Left lung (tissue), 14 donors: ENCODE measurements at regions of chr2 and their contacts with region 1.

Region 1: GRCh38 chr2:102240640-102241370 is 54.0 kb downstream of the IL1RL2 start:
- DNase-seq: peak; percentile 90 to 98 (median 95)
- ATAC-seq: peak; percentile 99
- H3K4me3 ChIP-seq: no peak overlapping the region
- H3K27ac ChIP-seq: peak overlapping the region; percentile 67 to 78
- H3K4me1 ChIP-seq: peaks cover 8 to 57% of the 10 kb centered on the region in 2 donors
- H3K27me3 ChIP-seq: no peaks in the 10 kb centered on the region
- CTCF ChIP-seq: peak; percentile 97 to 99

Region 2: GRCh38 chr2:101396316-101396717 is 844.5 kb before region 1 on chr2:
- intact Hi-C with region 1: no loop called
- DNase-seq: no peak
- ATAC-seq: peak; percentile 47
- H3K4me3 ChIP-seq: no peak overlapping the region
- H3K27ac ChIP-seq: no peak overlapping the region
- H3K4me1 ChIP-seq: peaks cover 0 to 15% of the 10 kb centered on the region in 2 donors
- H3K27me3 ChIP-seq: peaks cover 0 to 24% of the 10 kb centered on the region in 2 donors
- CTCF ChIP-seq: no peak

Region 3: GRCh38 chr2:101860157-101860556 is 380.6 kb before region 1 on chr2:
- intact Hi-C with region 1: no loop called
- DNase-seq: no peak
- ATAC-seq: no peak
- H3K4me3 ChIP-seq: no peak overlapping the region
- H3K27ac ChIP-seq: no peak overlapping the region
- H3K4me1 ChIP-seq: no peaks in the 10 kb centered on the region
- H3K27me3 ChIP-seq: no peaks in the 10 kb centered on the region
- CTCF ChIP-seq: no peak

Region 4: GRCh38 chr2:101883863-101884262 is 356.9 kb before region 1 on chr2:
- intact Hi-C with region 1: loop called in 1 of 2 experiments (anchors 10 kb)
- DNase-seq: peak in 1 of 4 donors; percentile 35
- ATAC-seq: peak; percentile 82
- H3K4me3 ChIP-seq: no peak overlapping the region
- H3K27ac ChIP-seq: peak overlapping the region in 1 of 2 donors; percentile 19
- H3K4me1 ChIP-seq: peaks cover 0 to 28% of the 10 kb centered on the region in 2 donors
- H3K27me3 ChIP-seq: no peaks in the 10 kb centered on the region
- CTCF ChIP-seq: peak; percentile 38 to 65

Region 5: DNA sequence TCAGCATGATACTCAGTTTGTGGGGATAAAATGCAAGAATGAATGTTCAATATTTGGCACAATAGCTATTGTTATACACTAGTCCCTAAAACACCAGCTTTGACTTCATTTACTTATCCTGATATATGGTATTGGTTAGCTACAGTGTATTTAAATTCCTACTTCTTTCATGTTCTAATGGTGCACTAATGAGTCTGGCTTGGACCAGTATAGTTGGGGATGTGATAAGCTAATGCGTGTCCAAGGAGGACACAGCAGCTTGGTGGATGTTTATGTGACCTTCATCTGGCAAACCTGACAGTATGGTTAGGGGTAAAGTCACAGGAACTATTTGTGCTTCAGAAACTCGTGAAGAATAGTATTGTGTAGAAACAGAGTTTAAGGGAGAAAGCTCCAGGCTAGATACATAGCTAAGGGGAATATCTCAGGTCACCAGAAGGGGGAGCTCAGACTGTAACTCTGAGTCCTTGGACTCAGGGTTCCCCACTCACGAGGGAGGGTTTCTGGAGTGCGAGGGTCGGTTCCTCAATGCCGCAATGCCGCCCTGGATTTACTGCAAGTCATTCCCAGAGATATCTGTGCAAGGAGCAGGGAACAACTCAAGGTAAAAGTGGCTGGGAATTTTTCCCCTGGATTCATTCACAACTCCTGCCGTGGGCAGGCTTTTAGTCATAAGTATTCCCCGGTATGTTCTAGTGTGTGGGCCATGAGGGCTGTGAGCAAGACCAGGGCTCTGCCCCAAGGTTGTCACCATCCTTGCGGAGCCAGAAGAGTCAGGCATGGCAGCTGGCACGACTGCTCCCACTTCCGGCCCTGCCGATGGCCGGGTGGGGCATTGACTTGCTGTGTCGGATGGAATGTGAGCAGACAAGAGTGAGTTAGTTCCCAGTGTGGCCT is 234.6 kb before region 1 on chr2:
- intact Hi-C with region 1: loop called in 1 of 2 experiments (anchors 5 kb)
- DNase-seq: peak in 1 of 4 donors; percentile 57
- ATAC-seq: peak; percentile 86
- H3K4me3 ChIP-seq: no peak overlapping the region
- H3K27ac ChIP-seq: no peak overlapping the region
- H3K4me1 ChIP-seq: peaks cover 12 to 35% of the 10 kb centered on the region in 2 donors
- H3K27me3 ChIP-seq: no peaks in the 10 kb centered on the region
- CTCF ChIP-seq: peak; percentile 58 to 59

Region 6: GRCh38 chr2:102291318-102292251 is 50.8 kb after region 1 on chr2:
- intact Hi-C with region 1: no loop called
- DNase-seq: no peak
- ATAC-seq: peak; percentile 26
- H3K4me3 ChIP-seq: no peak overlapping the region
- H3K27ac ChIP-seq: peak overlapping the region in 1 of 2 donors; percentile 68
- H3K4me1 ChIP-seq: peaks cover 0 to 43% of the 10 kb centered on the region in 2 donors
- H3K27me3 ChIP-seq: peaks cover 0 to 6% of the 10 kb centered on the region in 2 donors
- CTCF ChIP-seq: no peak

Region 7: DNA sequence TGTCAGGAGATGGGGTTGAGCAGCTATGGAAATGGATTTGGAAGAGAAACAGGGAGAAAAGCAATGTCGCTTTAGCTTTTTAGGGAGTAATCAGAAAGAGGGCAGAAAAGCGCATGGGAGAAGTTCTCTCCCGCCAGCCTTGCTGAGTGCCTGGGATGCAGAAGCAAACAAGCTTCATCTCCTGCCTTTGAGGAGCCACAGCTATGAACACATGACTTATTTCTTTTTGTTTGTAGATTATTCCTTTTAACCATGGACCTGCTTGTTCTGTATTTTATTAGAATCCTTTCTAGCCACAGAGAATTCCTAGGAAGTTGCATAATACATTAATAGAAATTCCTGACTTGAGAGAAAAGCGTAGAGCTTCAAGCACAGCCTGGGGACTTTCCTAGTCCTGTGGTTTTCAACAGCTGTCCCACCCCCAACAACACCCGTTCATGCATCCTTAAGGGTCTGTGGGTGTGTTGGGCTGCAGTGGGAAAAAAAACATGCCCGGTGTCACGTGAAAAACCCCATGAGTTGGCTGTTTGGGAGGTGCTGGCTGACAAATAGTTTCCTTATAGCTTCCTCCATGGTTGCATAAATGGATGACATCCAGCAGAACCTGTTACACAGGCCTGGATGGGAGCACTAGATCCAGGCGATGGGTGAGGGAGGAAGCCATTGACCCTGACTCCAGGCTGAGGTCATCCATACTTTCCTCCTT is 247.1 kb after region 1 on chr2:
- intact Hi-C with region 1: no loop called
- DNase-seq: peak in 2 of 4 donors; percentile 5 to 33
- ATAC-seq: peak; percentile 77
- H3K4me3 ChIP-seq: no peak overlapping the region
- H3K27ac ChIP-seq: no peak overlapping the region
- H3K4me1 ChIP-seq: peaks cover 0 to 15% of the 10 kb centered on the region in 2 donors
- H3K27me3 ChIP-seq: peaks cover 0 to 6% of the 10 kb centered on the region in 2 donors
- CTCF ChIP-seq: no peak